A673 (cell line): ENCODE measurements at regions of chr14 and their contacts with region 1.

Region 1: GRCh38 chr14:61475316-61475715 is 153.9 kb downstream of the PRKCH start:
- DNase-seq: peak; percentile 72
- H3K4me3 ChIP-seq: no peak overlapping the region
- H3K27ac ChIP-seq: no peak overlapping the region
- H3K4me1 ChIP-seq: peaks cover 21% of the 10 kb centered on the region
- H3K27me3 ChIP-seq: no peaks in the 10 kb centered on the region
- CTCF ChIP-seq: peak; percentile 85

Region 2: DNA sequence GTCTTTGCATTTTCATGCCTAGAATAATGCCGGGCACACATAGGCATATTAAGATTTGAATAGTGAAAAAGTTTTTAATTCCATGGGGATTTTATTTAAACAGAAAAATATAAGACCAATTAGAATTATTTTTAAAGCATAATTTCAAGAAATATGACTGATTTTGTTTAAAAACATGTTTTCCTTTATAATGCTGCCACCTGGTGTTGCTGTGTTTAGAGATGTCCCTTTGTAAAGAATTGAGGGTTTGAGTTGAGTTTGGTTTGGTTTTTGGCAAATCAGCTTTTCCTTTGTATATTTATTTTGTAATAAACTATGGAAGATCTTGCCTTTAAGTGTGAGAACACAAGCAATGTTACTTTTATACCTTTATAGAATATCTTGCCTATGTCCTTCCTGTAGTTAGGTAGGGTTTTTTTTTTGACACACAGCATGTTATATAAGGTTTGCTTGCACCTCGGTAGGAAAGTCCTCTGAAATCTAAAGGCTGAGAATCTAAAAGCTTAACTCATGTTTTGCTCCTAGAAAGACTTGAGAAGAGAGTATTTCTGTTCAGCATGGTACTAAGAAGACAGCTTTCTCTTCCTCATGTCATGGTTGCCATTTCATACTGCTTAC is 255.5 kb after region 1 on chr14:
- CTCF ChIA-PET with region 1: no interaction called
- POLR2A ChIA-PET with region 1: no interaction called
- intact Hi-C with region 1: loop called (anchors 2 kb)
- DNase-seq: no peak
- H3K4me3 ChIP-seq: no peak overlapping the region
- H3K27ac ChIP-seq: no peak overlapping the region
- H3K4me1 ChIP-seq: no peaks in the 10 kb centered on the region
- H3K27me3 ChIP-seq: no peaks in the 10 kb centered on the region
- CTCF ChIP-seq: peak; percentile 58; the same call in 1 of the 2 replicates